CD8-positive, alpha-beta T cell (primary cell): ENCODE measurements at regions of chr16 and their contacts with region 1.

Region 1: DNA sequence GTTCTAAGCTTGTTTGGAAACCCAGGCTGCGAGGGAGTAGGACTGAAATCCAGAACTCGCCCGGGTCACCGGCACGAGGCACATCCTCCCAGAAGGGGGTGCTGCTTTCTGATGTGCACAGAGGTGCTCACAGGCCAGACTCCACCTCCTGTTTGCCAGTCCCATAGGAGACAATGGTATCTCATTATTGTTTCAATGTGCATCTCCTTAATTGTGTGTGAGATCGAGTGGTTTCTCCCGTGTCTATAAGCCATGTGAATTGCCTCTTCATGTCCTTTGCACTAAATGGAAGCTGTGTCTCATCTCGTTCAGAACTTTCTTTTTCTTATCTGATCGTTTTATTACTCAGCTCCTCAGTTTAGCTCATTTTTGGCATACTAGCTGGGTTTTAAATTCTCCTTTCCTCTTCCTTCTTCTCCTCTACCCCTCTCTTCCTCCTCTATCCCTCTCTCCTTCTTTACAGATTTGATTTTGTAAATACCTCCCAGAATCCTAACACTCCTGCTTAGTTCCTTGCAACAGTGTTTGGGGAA is 32.1 kb upstream of the PRKCB start:
- DNase-seq: peak; percentile 39 to 83 (median 75)
- ATAC-seq: peak; percentile 92
- H3K4me3 ChIP-seq: no peak overlapping the region
- H3K4me3 Mint-ChIP-seq: no peak overlapping the region
- H3K27ac ChIP-seq: no peak overlapping the region
- H3K27ac Mint-ChIP-seq: no peak overlapping the region
- H3K4me1 ChIP-seq: peaks cover 4% of the 10 kb centered on the region
- H3K4me1 Mint-ChIP-seq: peaks cover 11% of the 10 kb centered on the region
- H3K27me3 ChIP-seq: no peaks in the 10 kb centered on the region
- H3K27me3 Mint-ChIP-seq: no peaks in the 10 kb centered on the region
- CTCF ChIP-seq: peak; percentile 77

Region 2: GRCh38 chr16:23742766-23743165 is 60.9 kb before region 1 on chr16:
- CTCF ChIA-PET with region 1: no interaction called
- POLR2A ChIA-PET with region 1: no interaction called
- intact Hi-C with region 1: no loop called
- DNase-seq: no peak
- ATAC-seq: no peak
- H3K4me3 ChIP-seq: no peak overlapping the region
- H3K4me3 Mint-ChIP-seq: no peak overlapping the region
- H3K27ac ChIP-seq: no peak overlapping the region
- H3K27ac Mint-ChIP-seq: no peak overlapping the region
- H3K4me1 ChIP-seq: no peaks in the 10 kb centered on the region
- H3K4me1 Mint-ChIP-seq: no peaks in the 10 kb centered on the region
- H3K27me3 ChIP-seq: peaks cover 0 to 4% of the 10 kb centered on the region in 2 experiments
- H3K27me3 Mint-ChIP-seq: peaks cover 42% of the 10 kb centered on the region
- CTCF ChIP-seq: no peak

Region 3: GRCh38 chr16:23788685-23789084 is 15.0 kb before region 1 on chr16:
- CTCF ChIA-PET with region 1: interaction called, 11 read pairs
- POLR2A ChIA-PET with region 1: no interaction called
- intact Hi-C with region 1: no loop called
- DNase-seq: no peak
- ATAC-seq: no peak
- H3K4me3 ChIP-seq: no peak overlapping the region
- H3K4me3 Mint-ChIP-seq: no peak overlapping the region
- H3K27ac ChIP-seq: no peak overlapping the region
- H3K27ac Mint-ChIP-seq: no peak overlapping the region
- H3K4me1 ChIP-seq: no peaks in the 10 kb centered on the region
- H3K4me1 Mint-ChIP-seq: peaks cover 3% of the 10 kb centered on the region
- H3K27me3 ChIP-seq: no peaks in the 10 kb centered on the region
- H3K27me3 Mint-ChIP-seq: peaks cover 5% of the 10 kb centered on the region
- CTCF ChIP-seq: no peak

Region 4: GRCh38 chr16:23858542-23858941 is 54.9 kb after region 1 on chr16:
- CTCF ChIA-PET with region 1: interaction called, 19 read pairs
- POLR2A ChIA-PET with region 1: interaction called, 6 read pairs
- intact Hi-C with region 1: no loop called
- DNase-seq: peak in 1 of 9 experiments; percentile 18
- ATAC-seq: no peak
- H3K4me3 ChIP-seq: no peak overlapping the region
- H3K4me3 Mint-ChIP-seq: no peak overlapping the region
- H3K27ac ChIP-seq: no peak overlapping the region
- H3K27ac Mint-ChIP-seq: peak overlapping the region; percentile 69
- H3K4me1 ChIP-seq: peaks cover 54% of the 10 kb centered on the region
- H3K4me1 Mint-ChIP-seq: peaks cover 87% of the 10 kb centered on the region
- H3K27me3 ChIP-seq: no peaks in the 10 kb centered on the region
- H3K27me3 Mint-ChIP-seq: no peaks in the 10 kb centered on the region
- CTCF ChIP-seq: no peak

Region 5: DNA sequence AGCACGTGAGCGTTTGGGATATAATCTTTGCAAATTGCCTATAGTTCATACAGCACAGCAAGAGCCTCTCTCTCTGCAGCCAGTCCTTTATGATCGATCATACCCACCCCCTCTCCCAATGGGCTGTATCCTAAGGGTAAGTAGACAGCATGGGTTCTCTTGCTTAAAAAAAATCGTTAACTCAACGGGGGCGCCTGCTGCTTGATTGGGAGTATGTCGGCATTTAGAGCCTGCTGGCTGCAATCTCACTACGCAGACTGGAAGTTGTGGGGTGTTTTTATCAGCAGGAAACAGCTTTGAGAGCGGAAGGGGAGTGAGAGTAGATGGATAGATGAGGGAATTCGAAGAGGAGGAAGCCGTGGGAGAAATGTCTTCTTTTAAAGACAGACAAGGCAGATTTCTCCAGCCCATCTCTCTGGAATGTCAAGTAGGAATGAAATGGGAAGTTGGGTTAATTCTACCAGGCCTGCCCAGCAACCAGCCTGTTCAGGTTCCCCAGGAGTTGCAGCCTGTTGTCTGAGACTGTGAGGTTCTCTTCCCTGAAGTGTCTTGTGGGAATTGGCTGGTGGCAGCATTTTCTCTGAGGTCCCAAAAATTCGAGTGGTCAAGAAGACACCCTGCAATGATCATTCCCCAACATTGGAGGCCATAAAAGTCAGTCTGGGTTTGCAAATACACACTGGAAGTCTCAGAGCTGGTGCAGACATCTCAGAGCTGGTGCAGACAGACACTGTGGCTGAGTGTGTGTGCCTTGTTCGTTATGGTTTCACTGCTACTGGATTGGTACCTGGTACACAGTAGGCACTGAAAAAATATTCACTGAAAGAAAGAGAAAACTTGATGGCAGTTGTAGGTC is 97.7 kb after region 1 on chr16:
- CTCF ChIA-PET with region 1: interaction called, 11 read pairs
- POLR2A ChIA-PET with region 1: no interaction called
- intact Hi-C with region 1: loop called in 1 of 2 experiments (anchors 5 kb)
- DNase-seq: peak in 1 of 9 experiments; percentile 14
- ATAC-seq: no peak
- H3K4me3 ChIP-seq: no peak overlapping the region
- H3K4me3 Mint-ChIP-seq: peak overlapping the region; percentile 57
- H3K27ac ChIP-seq: no peak overlapping the region
- H3K27ac Mint-ChIP-seq: peak overlapping the region; percentile 77
- H3K4me1 ChIP-seq: peaks cover 51% of the 10 kb centered on the region
- H3K4me1 Mint-ChIP-seq: peaks cover 83% of the 10 kb centered on the region
- H3K27me3 ChIP-seq: no peaks in the 10 kb centered on the region
- H3K27me3 Mint-ChIP-seq: no peaks in the 10 kb centered on the region
- CTCF ChIP-seq: no peak

Region 6: GRCh38 chr16:24022797-24023196 is 219.1 kb after region 1 on chr16:
- CTCF ChIA-PET with region 1: interaction called, 335 read pairs
- POLR2A ChIA-PET with region 1: no interaction called
- intact Hi-C with region 1: no loop called
- DNase-seq: no peak
- ATAC-seq: no peak
- H3K4me3 ChIP-seq: no peak overlapping the region
- H3K4me3 Mint-ChIP-seq: no peak overlapping the region
- H3K27ac ChIP-seq: no peak overlapping the region
- H3K27ac Mint-ChIP-seq: no peak overlapping the region
- H3K4me1 ChIP-seq: peaks cover 11% of the 10 kb centered on the region
- H3K4me1 Mint-ChIP-seq: peaks cover 43% of the 10 kb centered on the region
- H3K27me3 ChIP-seq: no peaks in the 10 kb centered on the region
- H3K27me3 Mint-ChIP-seq: no peaks in the 10 kb centered on the region
- CTCF ChIP-seq: no peak

Region 7: GRCh38 chr16:24418666-24419065 is 615.0 kb after region 1 on chr16:
- CTCF ChIA-PET with region 1: no interaction called
- POLR2A ChIA-PET with region 1: no interaction called
- intact Hi-C with region 1: no loop called
- DNase-seq: no peak
- ATAC-seq: no peak
- H3K4me3 ChIP-seq: no peak overlapping the region
- H3K4me3 Mint-ChIP-seq: no peak overlapping the region
- H3K27ac ChIP-seq: no peak overlapping the region
- H3K27ac Mint-ChIP-seq: no peak overlapping the region
- H3K4me1 ChIP-seq: no peaks in the 10 kb centered on the region
- H3K4me1 Mint-ChIP-seq: no peaks in the 10 kb centered on the region
- H3K27me3 ChIP-seq: no peaks in the 10 kb centered on the region
- H3K27me3 Mint-ChIP-seq: peaks cover 13% of the 10 kb centered on the region
- CTCF ChIP-seq: no peak

Region 8: GRCh38 chr16:24504472-24505345 is 701.1 kb after region 1 on chr16:
- CTCF ChIA-PET with region 1: interaction called, 7 read pairs
- POLR2A ChIA-PET with region 1: no interaction called
- intact Hi-C with region 1: loop called in 1 of 2 experiments (anchors 2 kb)
- DNase-seq: peak; percentile 17 to 77 (median 44)
- ATAC-seq: peak; percentile 71
- H3K4me3 ChIP-seq: no peak overlapping the region
- H3K4me3 Mint-ChIP-seq: no peak overlapping the region
- H3K27ac ChIP-seq: no peak overlapping the region
- H3K27ac Mint-ChIP-seq: no peak overlapping the region
- H3K4me1 ChIP-seq: no peaks in the 10 kb centered on the region
- H3K4me1 Mint-ChIP-seq: no peaks in the 10 kb centered on the region
- H3K27me3 ChIP-seq: peaks cover 0 to 2% of the 10 kb centered on the region in 2 experiments
- H3K27me3 Mint-ChIP-seq: peaks cover 25% of the 10 kb centered on the region
- CTCF ChIP-seq: peak; percentile 74

Region 9: DNA sequence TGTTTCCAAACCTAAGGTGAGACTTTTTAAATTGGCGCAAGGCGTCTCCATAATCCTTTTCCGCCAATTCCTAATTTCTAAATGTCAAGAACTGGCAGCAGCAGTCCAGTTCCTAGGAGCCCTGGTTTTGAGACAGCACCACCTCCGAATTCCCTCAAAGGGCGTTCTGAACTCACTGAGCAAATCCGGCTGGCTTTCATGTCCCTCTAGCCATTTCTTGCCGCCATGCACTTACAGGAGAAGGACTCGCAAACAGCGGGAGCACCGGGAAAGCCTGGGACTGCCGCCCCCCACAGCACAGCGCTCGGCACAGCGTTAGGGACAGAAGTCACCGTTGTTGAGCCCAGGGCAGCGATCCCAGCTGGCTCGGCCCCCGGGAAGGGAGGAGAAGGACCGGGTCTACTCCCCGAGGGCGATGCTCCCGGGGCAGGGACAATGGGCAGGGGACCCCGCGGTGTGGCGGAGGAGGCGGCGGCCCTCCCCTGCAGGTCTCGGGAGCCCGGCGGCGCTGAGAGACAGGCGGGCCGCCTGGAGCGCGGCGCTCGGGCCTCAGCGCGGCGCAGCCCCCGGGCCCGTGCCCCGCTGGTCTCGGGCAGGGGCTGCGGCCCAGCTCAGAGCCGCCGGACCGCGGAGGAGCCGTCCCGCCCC is 1211.0 kb after region 1 on chr16:
- CTCF ChIA-PET with region 1: no interaction called
- POLR2A ChIA-PET with region 1: no interaction called
- intact Hi-C with region 1: no loop called
- DNase-seq: peak in 6 of 9 experiments; percentile 19 to 55 (median 31)
- ATAC-seq: peak; percentile 41
- H3K4me3 ChIP-seq: peak overlapping the region; percentile 65 to 73
- H3K4me3 Mint-ChIP-seq: peak overlapping the region; percentile 93
- H3K27ac ChIP-seq: peak overlapping the region; percentile 75 to 83
- H3K27ac Mint-ChIP-seq: peak overlapping the region; percentile 96
- H3K4me1 ChIP-seq: peaks cover 51% of the 10 kb centered on the region
- H3K4me1 Mint-ChIP-seq: peaks cover 70% of the 10 kb centered on the region
- H3K27me3 ChIP-seq: no peaks in the 10 kb centered on the region
- H3K27me3 Mint-ChIP-seq: no peaks in the 10 kb centered on the region
- CTCF ChIP-seq: no peak